GM18951 (cell line): ENCODE measurements at regions of chr6 and their contacts with region 1.

Region 1: GRCh38 chr6:137076277-137077068 is 31.7 kb upstream of the IL20RA start:
- POLR2A ChIP-seq: no peak

Region 2: GRCh38 chr6:136446579-136447182 is 629.8 kb before region 1 on chr6:
- in situ Hi-C with region 1: no loop called
- POLR2A ChIP-seq: no peak

Region 3: GRCh38 chr6:136846046-136846445 is 230.4 kb before region 1 on chr6:
- in situ Hi-C with region 1: no loop called
- POLR2A ChIP-seq: no peak

Region 4: DNA sequence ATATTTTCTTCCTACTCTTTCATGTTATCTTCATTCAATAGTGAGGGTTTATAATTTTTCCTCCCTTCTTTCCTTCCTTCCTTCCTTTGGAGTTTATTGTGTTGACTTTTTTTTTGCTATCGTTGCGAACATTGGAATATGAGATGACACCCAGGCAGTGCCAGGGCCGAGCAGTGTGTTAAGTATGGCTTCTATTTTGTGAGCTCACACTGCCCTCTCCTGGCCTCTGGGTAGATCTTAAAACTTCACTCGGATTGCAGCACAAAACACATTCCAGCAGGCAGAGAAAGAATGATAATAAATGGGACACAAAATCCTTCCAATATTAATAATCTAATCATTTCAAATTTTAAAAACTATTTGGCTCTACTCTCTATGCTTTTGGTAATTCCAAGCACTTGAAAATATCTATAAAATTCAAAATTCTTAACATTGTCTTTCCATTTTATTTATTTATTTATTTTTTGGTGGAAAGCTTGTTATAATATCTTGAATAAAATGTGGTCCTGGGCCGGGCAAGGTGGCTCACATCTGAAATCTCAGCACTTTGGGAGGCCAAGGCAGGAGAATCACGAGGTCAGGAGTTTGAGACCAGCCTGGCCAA is 565.1 kb after region 1 on chr6:
- in situ Hi-C with region 1: loop called (anchors 25 kb)
- POLR2A ChIP-seq: no peak